Ascending aorta (tissue), 2 donors: ENCODE measurements at regions of chr16 and their contacts with region 1.

Region 1: DNA sequence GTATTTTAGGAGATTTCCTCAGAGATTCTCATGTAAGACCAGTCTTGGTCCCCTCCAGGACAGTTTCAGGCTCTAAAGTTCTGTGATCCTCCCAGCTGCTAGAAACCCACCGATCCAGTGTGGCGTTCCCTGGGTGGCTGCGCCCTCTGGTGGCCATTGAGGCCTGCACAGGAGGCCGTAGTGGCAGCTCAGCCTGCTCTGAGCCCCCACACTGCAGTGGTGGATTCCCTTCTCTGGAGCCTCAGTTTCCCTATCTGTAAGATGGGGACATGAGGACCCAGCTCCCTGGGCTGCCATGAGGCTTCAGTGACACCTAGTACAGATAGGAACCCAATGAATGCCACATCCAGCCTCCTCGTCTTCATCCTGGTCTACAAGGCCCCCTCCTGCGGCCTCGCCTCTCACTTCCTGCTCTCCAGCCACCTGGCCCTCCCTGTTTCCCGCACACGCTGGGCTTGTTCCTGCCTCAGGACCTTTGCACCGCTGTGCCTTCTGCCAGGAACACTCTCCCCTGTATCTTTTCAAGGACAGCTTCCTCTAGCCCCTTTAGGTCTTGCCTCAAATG is 16.5 kb downstream of the CCDC102A start:
- DNase-seq: peak in 1 of 2 donors; percentile 86
- H3K4me3 ChIP-seq: no peak overlapping the region
- H3K27ac ChIP-seq: no peak overlapping the region
- H3K4me1 ChIP-seq: no peaks in the 10 kb centered on the region
- H3K27me3 ChIP-seq: no peaks in the 10 kb centered on the region
- CTCF ChIP-seq: peak; percentile 81 to 98 (median 85)

Region 2: GRCh38 chr16:57422026-57422944 is 97.6 kb before region 1 on chr16:
- intact Hi-C with region 1: loop called (anchors 2 kb)
- DNase-seq: peak in 1 of 2 donors; percentile 83
- H3K4me3 ChIP-seq: no peak overlapping the region
- H3K27ac ChIP-seq: peak overlapping the region; percentile 28 to 58
- H3K4me1 ChIP-seq: peaks cover 0 to 24% of the 10 kb centered on the region in 2 donors
- H3K27me3 ChIP-seq: no peaks in the 10 kb centered on the region
- CTCF ChIP-seq: peak; percentile 71 to 87 (median 79)

Region 3: GRCh38 chr16:57432989-57433388 is 86.9 kb before region 1 on chr16:
- intact Hi-C with region 1: no loop called
- DNase-seq: no peak
- H3K4me3 ChIP-seq: no peak overlapping the region
- H3K27ac ChIP-seq: no peak overlapping the region
- H3K4me1 ChIP-seq: no peaks in the 10 kb centered on the region
- H3K27me3 ChIP-seq: no peaks in the 10 kb centered on the region
- CTCF ChIP-seq: no peak

Region 4: GRCh38 chr16:57462209-57462977 is 57.5 kb before region 1 on chr16 and contains the start of gene POLR2C:
- intact Hi-C with region 1: loop called (anchors 1 kb)
- DNase-seq: peak in 1 of 2 donors; percentile 93
- H3K4me3 ChIP-seq: peak within 1 kb of the TSS; percentile 88 to 100
- H3K27ac ChIP-seq: peak within 1 kb of the TSS; percentile 79 to 96
- H3K4me1 ChIP-seq: peaks cover 5 to 18% of the 10 kb centered on the region in 2 donors
- H3K27me3 ChIP-seq: no peaks in the 10 kb centered on the region
- CTCF ChIP-seq: peak; percentile 96 to 97 (median 97)
- total RNA-seq, gene POLR2C: 110 TPM

Region 5: GRCh38 chr16:57475711-57476339 is 44.1 kb before region 1 on chr16:
- intact Hi-C with region 1: loop called (anchors 5 kb)
- DNase-seq: peak in 1 of 2 donors; percentile 73
- H3K4me3 ChIP-seq: no peak overlapping the region
- H3K27ac ChIP-seq: peak overlapping the region in 1 of 2 donors; percentile 82
- H3K4me1 ChIP-seq: peaks cover 15 to 40% of the 10 kb centered on the region in 2 donors
- H3K27me3 ChIP-seq: no peaks in the 10 kb centered on the region
- CTCF ChIP-seq: peak; percentile 20 to 46 (median 39)

Region 6: DNA sequence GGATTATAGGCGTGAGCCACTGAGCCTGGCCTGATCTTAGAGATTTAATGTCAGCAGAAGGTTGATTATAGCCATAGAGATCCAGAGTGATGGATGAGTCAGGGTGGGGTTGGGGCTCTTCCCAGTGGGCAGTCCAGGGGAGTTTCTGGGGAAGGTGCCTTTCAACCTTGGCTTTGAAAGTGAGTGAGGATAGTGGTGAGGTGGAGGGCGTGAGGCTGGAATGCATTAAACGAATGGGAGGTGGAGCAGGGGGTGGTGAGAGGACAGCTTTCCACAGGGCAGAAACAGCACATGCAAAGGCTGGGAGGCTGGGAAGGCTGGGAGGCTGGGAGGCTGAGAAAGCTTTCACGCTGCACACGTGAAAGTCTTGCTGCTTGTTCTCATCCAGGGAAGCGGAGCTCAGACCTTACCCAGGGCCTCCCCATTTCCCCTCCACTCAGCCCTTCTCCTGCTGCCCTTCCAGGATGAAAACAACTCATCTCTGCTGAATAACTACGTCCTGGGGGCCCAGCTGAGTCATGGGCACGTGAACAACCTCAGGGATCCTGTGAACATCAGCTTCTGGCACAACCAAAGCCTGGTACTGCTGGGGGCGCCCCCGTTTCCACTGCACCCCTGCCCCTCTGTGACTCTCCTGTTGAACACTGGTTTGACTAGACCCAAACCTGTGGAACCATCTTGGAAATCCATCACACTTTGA is 44.8 kb after region 1 on chr16:
- intact Hi-C with region 1: no loop called
- DNase-seq: no peak
- H3K4me3 ChIP-seq: no peak overlapping the region
- H3K27ac ChIP-seq: no peak overlapping the region
- H3K4me1 ChIP-seq: no peaks in the 10 kb centered on the region
- H3K27me3 ChIP-seq: no peaks in the 10 kb centered on the region
- CTCF ChIP-seq: no peak